Activated CD8-positive, alpha-beta memory T cell treated with anti-CD3 and anti-CD28 coated beads, Interleukin-2, amount 10 ng/mL, durations not matched to agents 7 days and 5 days (primary cell): ENCODE measurements at regions of chr13 and their contacts with region 1.

Region 1: GRCh38 chr13:51814825-51815650 is 11.1 kb upstream of the DHRS12 start:
- DNase-seq: peak; percentile 87
- ATAC-seq: peak; percentile 95
- H3K4me3 Mint-ChIP-seq: peak overlapping the region; percentile 53
- H3K27ac Mint-ChIP-seq: peak overlapping the region; percentile 77
- H3K4me1 Mint-ChIP-seq: peaks cover 30% of the 10 kb centered on the region
- H3K27me3 Mint-ChIP-seq: no peaks in the 10 kb centered on the region

Region 2: GRCh38 chr13:51797664-51798488 is 17.2 kb before region 1 on chr13:
- CTCF ChIA-PET with region 1: interaction called, 58 read pairs
- DNase-seq: peak; percentile 74
- ATAC-seq: peak; percentile 59
- H3K4me3 Mint-ChIP-seq: no peak overlapping the region
- H3K27ac Mint-ChIP-seq: no peak overlapping the region
- H3K4me1 Mint-ChIP-seq: peaks cover 35% of the 10 kb centered on the region
- H3K27me3 Mint-ChIP-seq: no peaks in the 10 kb centered on the region

Region 3: DNA sequence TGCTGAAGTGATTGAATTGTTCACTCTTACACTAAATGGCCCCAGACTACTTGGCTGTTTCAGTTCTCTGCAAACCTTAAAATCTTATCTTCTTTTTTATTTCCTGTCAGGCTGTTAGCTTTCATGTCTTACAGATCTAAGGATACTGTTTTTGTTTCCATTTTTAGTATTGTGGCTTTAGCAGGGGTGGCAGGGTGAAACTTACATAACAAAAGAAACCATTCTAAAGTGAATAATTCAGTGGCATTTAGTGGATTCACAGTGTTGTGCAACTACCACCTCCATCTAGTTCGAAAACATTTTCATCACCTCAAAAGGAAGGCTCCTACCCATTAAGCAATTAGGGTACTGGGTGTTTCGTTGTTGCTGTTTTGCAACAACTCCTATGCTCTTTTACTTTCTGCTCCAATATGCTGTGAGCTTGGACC is 10.1 kb after region 1 on chr13:
- CTCF ChIA-PET with region 1: interaction called, 19 read pairs
- DNase-seq: no peak
- ATAC-seq: peak; percentile 57
- H3K4me3 Mint-ChIP-seq: peak overlapping the region; percentile 39
- H3K27ac Mint-ChIP-seq: peak overlapping the region; percentile 80
- H3K4me1 Mint-ChIP-seq: peaks cover 57% of the 10 kb centered on the region
- H3K27me3 Mint-ChIP-seq: no peaks in the 10 kb centered on the region

Region 4: GRCh38 chr13:51838240-51838846 is 23.3 kb after region 1 on chr13:
- CTCF ChIA-PET with region 1: interaction called, 43 read pairs
- DNase-seq: no peak
- ATAC-seq: no peak
- H3K4me3 Mint-ChIP-seq: no peak overlapping the region
- H3K27ac Mint-ChIP-seq: no peak overlapping the region
- H3K4me1 Mint-ChIP-seq: peaks cover 18% of the 10 kb centered on the region
- H3K27me3 Mint-ChIP-seq: peaks cover 10% of the 10 kb centered on the region

Region 5: GRCh38 chr13:52128714-52129700 is 314.0 kb after region 1 on chr13 and contains the start of gene NEK5:
- CTCF ChIA-PET with region 1: interaction called, 31 read pairs
- DNase-seq: peak; percentile 66
- ATAC-seq: peak; percentile 84
- H3K4me3 Mint-ChIP-seq: peak within 1 kb of the TSS; percentile 71
- H3K27ac Mint-ChIP-seq: no peak within 1 kb of the TSS
- H3K4me1 Mint-ChIP-seq: peaks cover 14% of the 10 kb centered on the region
- H3K27me3 Mint-ChIP-seq: peaks cover 21% of the 10 kb centered on the region
- total RNA-seq, gene NEK5: not detected